ENCODE measurements at regions of chr15 and their contacts with region 1.

Region 1: DNA sequence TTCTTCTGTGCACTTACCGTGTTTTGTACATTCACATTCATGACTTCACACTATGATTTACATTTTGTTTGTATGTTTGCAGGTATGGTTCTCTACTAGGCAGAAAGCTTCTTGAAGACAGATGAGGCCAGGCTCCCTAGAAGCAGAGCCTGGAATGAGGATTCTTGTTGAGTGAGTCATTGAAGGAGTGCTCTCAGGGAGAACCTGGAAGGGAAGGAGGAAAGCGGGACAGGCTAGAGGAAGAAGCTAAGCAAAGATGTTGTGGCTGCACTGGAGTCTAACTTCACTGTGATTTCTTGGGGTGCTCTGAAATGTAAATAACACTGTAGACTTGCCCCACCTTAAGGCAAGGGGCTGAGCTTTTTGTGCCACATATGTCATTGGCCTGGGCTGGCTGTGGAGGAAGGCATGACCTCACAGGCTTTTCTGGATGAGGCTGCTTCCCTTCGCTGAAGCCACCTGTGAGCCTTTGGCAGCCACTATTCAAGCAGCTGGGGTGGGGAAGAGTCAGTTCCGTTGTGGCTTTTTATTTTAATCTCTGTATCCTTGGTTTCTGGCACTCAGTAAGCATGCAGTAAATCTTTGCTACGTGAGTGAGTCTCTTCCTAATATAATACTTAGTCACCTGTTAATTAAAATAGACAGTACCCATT is 307.3 kb downstream of the SV2B start:
- DNase-seq: peak; percentile 79
- H3K4me3 ChIP-seq: no peak overlapping the region
- H3K27ac ChIP-seq: peak overlapping the region; percentile 78
- H3K4me1 ChIP-seq: peaks cover 19% of the 10 kb centered on the region
- H3K27me3 ChIP-seq: no peaks in the 10 kb centered on the region
- CTCF ChIP-seq: no peak

Region 2: DNA sequence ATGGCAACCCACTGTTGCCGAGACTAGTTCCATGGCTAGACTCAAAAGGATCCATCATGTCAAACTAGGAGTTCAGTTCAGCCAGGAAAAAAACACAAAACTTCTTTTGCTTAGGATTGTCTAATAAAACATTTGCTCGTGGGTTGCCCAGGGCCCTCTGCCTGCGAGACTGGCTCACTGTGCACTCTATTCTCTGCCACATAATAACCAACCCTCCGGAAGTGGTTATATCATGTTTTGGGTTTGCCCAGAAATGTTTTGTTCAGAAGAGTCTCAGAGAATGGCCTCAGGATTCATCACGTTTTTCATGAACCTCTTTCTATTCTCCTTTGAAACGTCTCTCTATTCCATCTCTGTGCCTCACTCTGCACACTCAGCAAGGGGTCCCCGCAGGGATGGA is 91.2 kb before region 1 on chr15:
- CTCF ChIA-PET with region 1: no interaction called
- dilution Hi-C with region 1: loop called (anchors 5 kb)
- in situ Hi-C with region 1: no loop called
- intact Hi-C with region 1: no loop called
- DNase-seq: no peak
- H3K4me3 ChIP-seq: no peak overlapping the region
- H3K27ac ChIP-seq: no peak overlapping the region
- H3K4me1 ChIP-seq: no peaks in the 10 kb centered on the region
- H3K27me3 ChIP-seq: no peaks in the 10 kb centered on the region
- CTCF ChIP-seq: no peak